ENCODE measurements at regions of chr17 and their contacts with region 1.

Region 1: GRCh38 chr17:46020023-46020761 is 21.1 kb downstream of the STH start:
- DNase-seq: peak; percentile 67 to 78 (median 73)
- H3K4me3 ChIP-seq: no peak overlapping the region
- H3K4me3 Mint-ChIP-seq: peak overlapping the region; percentile 22 to 69 (median 47)
- H3K27ac ChIP-seq: peak overlapping the region; percentile 42
- H3K27ac Mint-ChIP-seq: peak overlapping the region; percentile 85 to 96 (median 93)
- H3K4me1 ChIP-seq: peaks cover 40% of the 10 kb centered on the region
- H3K4me1 Mint-ChIP-seq: peaks cover 12 to 35% (median 28%) of the 10 kb centered on the region in 4 donors
- H3K27me3 ChIP-seq: no peaks in the 10 kb centered on the region
- H3K27me3 Mint-ChIP-seq: no peaks in the 10 kb centered on the region

Region 2: GRCh38 chr17:45812102-45812501 is 208.1 kb before region 1 on chr17:
- CTCF ChIA-PET with region 1: no interaction called
- POLR2A ChIA-PET with region 1: no interaction called
- intact Hi-C with region 1: no loop called
- DNase-seq: no peak
- H3K4me3 ChIP-seq: no peak overlapping the region
- H3K4me3 Mint-ChIP-seq: no peak overlapping the region
- H3K27ac ChIP-seq: no peak overlapping the region
- H3K27ac Mint-ChIP-seq: no peak overlapping the region
- H3K4me1 ChIP-seq: no peaks in the 10 kb centered on the region
- H3K4me1 Mint-ChIP-seq: no peaks in the 10 kb centered on the region
- H3K27me3 ChIP-seq: no peaks in the 10 kb centered on the region
- H3K27me3 Mint-ChIP-seq: peaks cover 0 to 8% of the 10 kb centered on the region in 2 donors

Region 3: DNA sequence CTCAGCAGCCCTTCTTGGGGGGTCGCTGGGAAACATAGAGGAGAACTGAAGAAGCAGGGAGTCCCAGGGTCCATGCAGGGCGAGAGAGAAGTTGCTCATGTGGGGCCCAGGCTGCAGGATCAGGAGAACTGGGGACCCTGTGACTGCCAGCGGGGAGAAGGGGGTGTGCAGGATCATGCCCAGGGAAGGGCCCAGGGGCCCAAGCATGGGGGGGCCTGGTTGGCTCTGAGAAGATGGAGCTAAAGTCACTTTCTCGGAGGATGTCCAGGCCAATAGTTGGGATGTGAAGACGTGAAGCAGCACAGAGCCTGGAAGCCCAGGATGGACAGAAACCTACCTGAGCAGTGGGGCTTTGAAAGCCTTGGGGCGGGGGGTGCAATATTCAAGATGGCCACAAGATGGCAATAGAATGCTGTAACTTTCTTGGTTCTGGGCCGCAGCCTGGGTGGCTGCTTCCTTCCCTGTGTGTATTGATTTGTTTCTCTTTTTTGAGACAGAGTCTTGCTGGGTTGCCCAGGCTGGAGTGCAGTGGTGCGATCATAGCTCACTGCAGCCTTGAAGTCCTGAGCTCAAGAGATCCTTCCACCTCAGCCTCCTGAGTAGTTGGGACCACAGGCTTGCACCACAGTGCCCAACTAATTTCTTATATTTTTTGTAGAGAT is 17.8 kb before region 1 on chr17:
- CTCF ChIA-PET with region 1: interaction called, 17 read pairs
- POLR2A ChIA-PET with region 1: no interaction called
- intact Hi-C with region 1: no loop called
- DNase-seq: peak; percentile 67 to 78 (median 72)
- H3K4me3 ChIP-seq: no peak overlapping the region
- H3K4me3 Mint-ChIP-seq: no peak overlapping the region
- H3K27ac ChIP-seq: no peak overlapping the region
- H3K27ac Mint-ChIP-seq: no peak overlapping the region
- H3K4me1 ChIP-seq: peaks cover 5% of the 10 kb centered on the region
- H3K4me1 Mint-ChIP-seq: no peaks in the 10 kb centered on the region
- H3K27me3 ChIP-seq: no peaks in the 10 kb centered on the region
- H3K27me3 Mint-ChIP-seq: peaks cover 0 to 2% of the 10 kb centered on the region in 2 donors

Region 4: GRCh38 chr17:46035112-46035818 is 15.1 kb after region 1 on chr17:
- CTCF ChIA-PET with region 1: interaction called, 6 read pairs
- POLR2A ChIA-PET with region 1: interaction called, 10 read pairs
- intact Hi-C with region 1: no loop called
- DNase-seq: peak in 3 of 5 donors; percentile 13 to 57 (median 24)
- H3K4me3 ChIP-seq: no peak overlapping the region
- H3K4me3 Mint-ChIP-seq: no peak overlapping the region
- H3K27ac ChIP-seq: no peak overlapping the region
- H3K27ac Mint-ChIP-seq: peak overlapping the region; percentile 3 to 80 (median 58)
- H3K4me1 ChIP-seq: peaks cover 7% of the 10 kb centered on the region
- H3K4me1 Mint-ChIP-seq: peaks cover 11 to 19% (median 12%) of the 10 kb centered on the region in 4 donors
- H3K27me3 ChIP-seq: no peaks in the 10 kb centered on the region
- H3K27me3 Mint-ChIP-seq: no peaks in the 10 kb centered on the region

Region 5: DNA sequence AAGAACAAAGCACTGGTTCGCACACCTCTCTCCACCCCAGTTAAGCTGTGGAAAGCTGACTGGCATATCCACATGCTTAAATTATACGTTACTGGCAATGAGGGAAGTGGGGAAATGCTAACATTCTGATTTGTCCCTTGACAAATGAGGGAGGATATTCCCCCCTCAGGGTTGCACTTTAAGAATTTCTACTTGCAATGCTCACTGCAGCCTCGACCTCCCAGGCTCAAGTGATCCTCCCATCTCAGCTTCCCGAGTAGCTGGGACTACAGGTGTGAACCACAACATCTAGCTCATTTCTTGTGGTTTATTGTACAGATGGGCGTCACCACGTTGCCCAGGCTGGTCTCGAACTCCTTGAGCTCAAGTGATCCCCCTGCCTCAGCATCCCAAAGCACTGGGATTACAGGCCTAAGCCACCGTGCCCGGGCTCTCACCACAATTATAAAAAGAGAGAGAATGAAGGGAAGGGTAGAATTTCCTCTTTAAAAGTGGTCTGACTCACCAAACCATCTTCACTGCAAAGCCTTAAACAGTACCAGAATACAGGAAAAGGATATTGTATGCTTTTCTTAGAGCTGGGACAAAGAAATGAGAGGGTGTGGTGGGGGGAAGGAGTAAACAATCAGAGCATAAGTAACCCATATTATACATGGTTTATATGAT is 134.1 kb after region 1 on chr17:
- CTCF ChIA-PET with region 1: no interaction called
- POLR2A ChIA-PET with region 1: no interaction called
- intact Hi-C with region 1: no loop called
- DNase-seq: peak; percentile 19 to 65 (median 26)
- H3K4me3 ChIP-seq: peak overlapping the region in 1 of 2 donors; percentile 17
- H3K4me3 Mint-ChIP-seq: peak overlapping the region; percentile 33 to 84 (median 71)
- H3K27ac ChIP-seq: peak overlapping the region; percentile 40
- H3K27ac Mint-ChIP-seq: peak overlapping the region; percentile 63 to 92 (median 85)
- H3K4me1 ChIP-seq: peaks cover 98% of the 10 kb centered on the region
- H3K4me1 Mint-ChIP-seq: peaks cover 67 to 94% (median 84%) of the 10 kb centered on the region in 4 donors
- H3K27me3 ChIP-seq: no peaks in the 10 kb centered on the region
- H3K27me3 Mint-ChIP-seq: no peaks in the 10 kb centered on the region

Measured in CD4-positive, alpha-beta memory T cell (primary cell).